ENCODE measurements at regions of chr15 and their contacts with region 1.

Region 1: GRCh38 chr15:99928429-99928981 is 195.3 kb upstream of the LYSMD4 start:
- DNase-seq: peak; percentile 87
- H3K4me3 ChIP-seq: peak overlapping the region; percentile 33
- H3K27ac ChIP-seq: peak overlapping the region; percentile 28
- H3K4me1 ChIP-seq: peaks cover 4% of the 10 kb centered on the region
- H3K27me3 ChIP-seq: no peaks in the 10 kb centered on the region
- CTCF ChIP-seq: peak; percentile 65

Region 2: GRCh38 chr15:99863550-99864198 is 64.8 kb before region 1 on chr15:
- intact Hi-C with region 1: no loop called
- DNase-seq: no peak
- H3K4me3 ChIP-seq: no peak overlapping the region
- H3K27ac ChIP-seq: no peak overlapping the region
- H3K4me1 ChIP-seq: no peaks in the 10 kb centered on the region
- H3K27me3 ChIP-seq: no peaks in the 10 kb centered on the region
- CTCF ChIP-seq: no peak

Region 3: GRCh38 chr15:100093211-100094126 is 165.0 kb after region 1 on chr15:
- intact Hi-C with region 1: no loop called
- DNase-seq: no peak
- H3K4me3 ChIP-seq: no peak overlapping the region
- H3K27ac ChIP-seq: no peak overlapping the region
- H3K4me1 ChIP-seq: no peaks in the 10 kb centered on the region
- H3K27me3 ChIP-seq: no peaks in the 10 kb centered on the region
- CTCF ChIP-seq: no peak

Region 4: DNA sequence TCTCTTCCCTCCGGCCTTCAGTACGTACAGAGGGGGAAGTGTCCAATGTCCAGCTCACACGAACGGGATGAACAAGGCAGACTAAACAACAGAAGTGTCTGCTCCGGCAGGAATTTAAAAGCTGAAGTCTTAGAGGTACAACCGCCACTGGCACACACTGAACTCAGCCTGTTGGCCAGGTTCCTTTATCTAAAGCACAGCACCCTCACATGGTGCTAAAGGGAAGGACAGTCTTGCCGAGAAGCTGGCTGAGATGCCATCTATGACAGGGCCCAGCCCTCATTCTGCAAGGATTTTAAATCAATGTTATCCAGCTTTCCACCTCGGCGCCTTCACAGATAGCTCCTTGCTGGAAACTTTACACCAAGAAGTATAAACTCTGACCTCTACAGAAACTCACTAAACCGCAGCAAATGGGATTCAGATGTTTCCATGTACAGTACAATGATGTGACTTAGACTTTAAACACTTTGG is 410.5 kb after region 1 on chr15:
- intact Hi-C with region 1: loop called (anchors 2 kb)
- DNase-seq: peak; percentile 70
- H3K4me3 ChIP-seq: no peak overlapping the region
- H3K27ac ChIP-seq: no peak overlapping the region
- H3K4me1 ChIP-seq: no peaks in the 10 kb centered on the region
- H3K27me3 ChIP-seq: no peaks in the 10 kb centered on the region
- CTCF ChIP-seq: peak; percentile 62

Region 5: DNA sequence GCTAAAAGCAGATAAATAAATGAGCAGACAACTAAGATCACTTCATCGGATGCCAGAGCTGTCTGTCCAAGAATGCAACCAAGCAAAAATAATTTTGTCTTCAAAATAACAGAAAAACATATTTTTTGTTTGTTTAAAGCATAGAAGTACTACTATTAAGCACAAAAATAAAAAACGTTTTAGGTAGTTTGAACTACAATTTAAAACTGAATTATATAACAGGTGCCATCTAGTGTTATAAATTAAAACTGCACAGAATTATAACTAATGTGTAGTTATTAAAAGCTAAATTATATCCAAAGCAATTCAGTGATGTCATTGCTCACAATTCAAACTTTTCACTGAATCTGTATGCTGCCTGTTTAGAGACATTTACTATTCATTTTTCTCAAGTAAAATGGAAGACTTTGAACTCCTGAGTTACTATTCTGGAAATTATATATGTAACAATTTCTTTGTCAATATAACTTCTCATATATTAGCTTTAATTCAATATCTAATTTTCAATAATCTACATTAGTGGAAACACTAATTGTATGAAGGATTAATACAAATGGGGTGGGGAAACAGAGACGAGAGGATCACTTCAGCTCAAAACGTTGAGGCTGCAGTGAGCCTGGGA is 644.0 kb after region 1 on chr15:
- intact Hi-C with region 1: loop called (anchors 10 kb)
- DNase-seq: no peak
- H3K4me3 ChIP-seq: no peak overlapping the region
- H3K27ac ChIP-seq: no peak overlapping the region
- H3K4me1 ChIP-seq: no peaks in the 10 kb centered on the region
- H3K27me3 ChIP-seq: no peaks in the 10 kb centered on the region
- CTCF ChIP-seq: peak; percentile 51

Measured in colonic mucosa (tissue), 4 donors.